Activated CD4-positive, alpha-beta T cell treated with anti-CD3 and anti-CD28 coated beads, Interleukin-2, amount 10 ng/mL, durations not matched to agents 24 days and 14 days (primary cell): ENCODE measurements at regions of chr11 and their contacts with region 1.

Region 1: DNA sequence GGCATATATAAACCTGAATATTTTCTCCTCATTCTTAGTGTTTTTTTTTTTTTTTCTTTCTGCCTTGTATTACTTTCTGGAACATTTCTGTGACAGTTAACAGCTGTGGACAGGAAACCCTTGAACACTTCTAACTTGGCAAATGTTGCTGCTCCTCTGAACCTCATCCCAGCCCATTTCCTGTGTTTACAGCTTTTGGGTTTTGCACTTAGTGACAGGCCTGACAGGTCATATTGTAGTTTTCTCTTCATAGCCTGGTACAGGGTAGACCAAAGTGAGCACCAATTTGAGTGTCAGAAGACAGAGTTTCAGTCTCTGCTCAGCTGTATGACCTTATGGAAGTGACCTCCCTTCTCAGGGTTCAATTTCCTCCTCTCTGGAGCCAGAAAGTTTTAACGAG is 91.6 kb downstream of the STIM1 start:
- DNase-seq: peak; percentile 92
- H3K4me3 Mint-ChIP-seq: peak overlapping the region; percentile 69
- H3K27ac Mint-ChIP-seq: peak overlapping the region; percentile 85
- H3K4me1 Mint-ChIP-seq: peaks cover 87% of the 10 kb centered on the region
- H3K27me3 Mint-ChIP-seq: no peaks in the 10 kb centered on the region

Region 2: GRCh38 chr11:3645552-3645951 is 301.5 kb before region 1 on chr11:
- intact Hi-C with region 1: no loop called
- DNase-seq: no peak
- H3K4me3 Mint-ChIP-seq: no peak overlapping the region
- H3K27ac Mint-ChIP-seq: no peak overlapping the region
- H3K4me1 Mint-ChIP-seq: peaks cover 5% of the 10 kb centered on the region
- H3K27me3 Mint-ChIP-seq: peaks cover 46% of the 10 kb centered on the region

Region 3: GRCh38 chr11:3775736-3776406 is 171.2 kb before region 1 on chr11:
- intact Hi-C with region 1: no loop called
- DNase-seq: no peak
- H3K4me3 Mint-ChIP-seq: no peak overlapping the region
- H3K27ac Mint-ChIP-seq: no peak overlapping the region
- H3K4me1 Mint-ChIP-seq: peaks cover 4% of the 10 kb centered on the region
- H3K27me3 Mint-ChIP-seq: no peaks in the 10 kb centered on the region

Region 4: GRCh38 chr11:3905080-3905953 is 41.7 kb before region 1 on chr11:
- intact Hi-C with region 1: loop called (anchors 5 kb)
- DNase-seq: peak; percentile 88
- H3K4me3 Mint-ChIP-seq: peak overlapping the region; percentile 43
- H3K27ac Mint-ChIP-seq: peak overlapping the region; percentile 75
- H3K4me1 Mint-ChIP-seq: peaks cover 62% of the 10 kb centered on the region
- H3K27me3 Mint-ChIP-seq: no peaks in the 10 kb centered on the region

Region 5: DNA sequence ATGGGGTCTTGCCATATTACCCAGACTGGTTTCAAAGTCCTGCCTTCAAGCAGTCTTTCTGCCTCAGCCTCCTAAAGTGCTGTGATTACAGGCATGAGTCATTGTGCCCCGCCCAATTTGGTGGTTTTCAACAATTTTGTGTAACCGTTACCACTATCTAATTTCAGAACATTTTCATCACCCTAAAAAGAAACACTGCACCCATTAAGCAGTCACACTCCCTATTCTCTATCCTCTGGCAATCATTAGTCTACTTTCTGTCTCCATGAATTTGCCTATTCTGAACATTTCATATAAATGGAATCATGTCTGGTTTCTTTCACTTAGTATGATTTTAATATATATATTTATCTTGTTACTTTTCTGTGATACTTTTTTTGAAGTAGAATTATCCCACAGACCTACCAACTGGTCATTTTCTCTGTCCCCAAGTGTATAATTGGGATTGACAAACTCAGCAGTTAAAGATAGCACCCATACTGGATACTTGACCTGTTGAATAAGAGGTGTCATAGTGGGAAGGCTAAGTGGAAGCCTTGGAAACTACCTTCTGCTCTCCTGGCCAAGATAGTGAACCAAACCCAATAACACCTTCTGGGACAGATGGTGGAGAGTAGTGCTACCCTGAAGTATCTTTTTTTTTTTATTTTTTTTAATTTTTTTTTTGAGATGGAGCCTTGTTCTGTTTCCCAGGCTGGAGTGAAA is 26.8 kb before region 1 on chr11:
- intact Hi-C with region 1: loop called (anchors 2 kb)
- DNase-seq: peak; percentile 89
- H3K4me3 Mint-ChIP-seq: peak overlapping the region; percentile 22
- H3K27ac Mint-ChIP-seq: peak overlapping the region; percentile 31
- H3K4me1 Mint-ChIP-seq: peaks cover 49% of the 10 kb centered on the region
- H3K27me3 Mint-ChIP-seq: no peaks in the 10 kb centered on the region

Region 6: DNA sequence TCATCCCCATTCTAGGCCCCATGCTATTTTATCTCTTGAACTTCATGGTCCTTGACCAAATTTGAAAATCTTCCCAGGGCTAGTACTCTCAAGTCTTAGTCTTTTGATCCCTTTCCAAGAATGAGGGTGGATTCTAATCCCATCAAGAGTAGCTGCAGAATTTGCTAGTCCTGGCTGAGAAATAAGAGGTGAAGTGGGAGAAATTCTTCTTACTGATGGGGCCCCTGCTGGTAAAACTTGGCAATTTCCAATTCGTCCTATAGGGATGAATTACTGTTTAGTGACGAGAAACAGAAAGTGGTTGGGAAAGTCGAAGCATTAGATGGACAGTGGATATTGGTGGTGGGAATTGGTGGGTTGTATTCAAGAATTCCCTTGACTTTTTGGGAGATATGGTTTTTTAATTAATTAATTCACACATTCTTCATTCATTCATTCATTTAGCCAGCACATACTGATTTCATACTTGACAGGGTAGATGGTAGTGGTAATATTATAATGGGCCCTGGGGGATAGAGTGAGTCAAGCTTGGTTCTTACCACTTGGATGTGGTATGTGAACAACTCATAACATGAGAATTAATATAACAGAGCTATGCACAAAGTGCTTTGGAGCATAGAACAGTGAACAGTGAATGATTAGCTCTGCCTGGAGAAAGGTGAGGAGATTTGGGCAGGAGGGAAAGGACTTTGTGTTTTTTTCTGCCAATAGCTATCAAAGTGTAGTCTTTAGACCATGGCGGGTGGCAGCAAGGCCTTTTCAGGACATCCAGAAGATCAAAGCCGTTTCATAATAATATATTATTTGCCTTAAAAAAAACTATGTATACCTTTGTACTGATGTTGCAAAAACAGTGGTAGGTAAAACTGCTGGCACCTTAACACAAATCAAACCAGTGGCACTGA is 12.2 kb after region 1 on chr11:
- intact Hi-C with region 1: loop called (anchors 1 kb)
- DNase-seq: no peak
- H3K4me3 Mint-ChIP-seq: no peak overlapping the region
- H3K27ac Mint-ChIP-seq: peak overlapping the region; percentile 67
- H3K4me1 Mint-ChIP-seq: peaks cover 59% of the 10 kb centered on the region
- H3K27me3 Mint-ChIP-seq: no peaks in the 10 kb centered on the region

Region 7: GRCh38 chr11:3984896-3985295 is 37.8 kb after region 1 on chr11:
- intact Hi-C with region 1: loop called (anchors 5 kb)
- DNase-seq: peak; percentile 79
- H3K4me3 Mint-ChIP-seq: no peak overlapping the region
- H3K27ac Mint-ChIP-seq: peak overlapping the region; percentile 61
- H3K4me1 Mint-ChIP-seq: peaks cover 61% of the 10 kb centered on the region
- H3K27me3 Mint-ChIP-seq: no peaks in the 10 kb centered on the region

Region 8: GRCh38 chr11:4072668-4073285 is 125.7 kb after region 1 on chr11:
- intact Hi-C with region 1: loop called (anchors 2 kb)
- DNase-seq: peak; percentile 88
- H3K4me3 Mint-ChIP-seq: no peak overlapping the region
- H3K27ac Mint-ChIP-seq: peak overlapping the region; percentile 5
- H3K4me1 Mint-ChIP-seq: peaks cover 44% of the 10 kb centered on the region
- H3K27me3 Mint-ChIP-seq: no peaks in the 10 kb centered on the region